Thyroid gland (tissue), 4 donors: ENCODE measurements at regions of chr9 and their contacts with region 1.

Region 1: DNA sequence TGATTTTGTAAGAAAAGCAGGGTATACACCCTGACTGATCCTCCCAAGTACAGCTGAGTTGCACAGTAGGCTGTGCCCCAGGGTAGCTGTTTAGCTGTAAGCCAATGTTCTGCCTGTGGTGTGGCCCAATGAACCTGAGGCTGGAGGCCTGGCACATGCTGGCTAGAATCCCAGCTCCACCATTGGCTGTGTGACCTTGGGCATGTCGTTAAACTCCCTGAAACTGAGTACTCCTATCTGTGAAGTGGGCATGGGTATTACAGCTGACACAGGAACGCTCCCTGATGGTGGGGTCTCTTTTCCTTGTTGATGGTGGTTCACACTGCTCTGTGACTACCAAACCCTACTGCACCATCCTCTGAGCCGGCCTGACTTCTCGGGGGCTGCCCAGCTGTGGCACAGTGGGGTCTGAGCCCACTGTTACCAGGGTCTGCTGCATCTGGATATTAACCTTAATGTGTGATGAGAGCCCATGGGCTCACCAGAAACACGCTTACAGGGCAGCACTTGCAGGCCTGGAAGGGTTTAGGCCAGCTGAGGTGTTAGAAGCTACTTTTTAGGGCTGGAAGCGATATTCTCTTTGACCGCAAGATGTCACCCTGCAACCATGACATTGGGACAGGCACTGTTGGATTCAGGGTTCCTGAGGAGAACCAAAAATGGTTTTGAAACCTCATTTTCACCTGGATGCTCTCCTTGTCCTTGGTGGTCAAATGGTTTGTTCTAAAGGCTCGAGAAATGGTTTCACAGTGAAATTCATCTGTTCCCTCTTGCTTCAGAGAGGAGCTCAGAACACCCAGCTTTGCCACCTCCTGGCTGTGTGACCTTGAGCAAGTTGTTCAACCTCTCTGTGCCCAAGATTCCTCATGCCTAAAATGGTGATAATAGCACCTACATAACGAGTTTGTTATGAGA is 6.8 kb upstream of the GADD45G start:
- DNase-seq: peak; percentile 61 to 63
- H3K4me3 ChIP-seq: no peak overlapping the region
- H3K27ac ChIP-seq: no peak overlapping the region
- H3K4me1 ChIP-seq: no peaks in the 10 kb centered on the region
- H3K27me3 ChIP-seq: no peaks in the 10 kb centered on the region
- CTCF ChIP-seq: peak; percentile 34 to 91 (median 86)
- POLR2A ChIP-seq: no peak

Region 2: GRCh38 chr9:90860826-90861225 is 1262.9 kb after region 1 on chr9:
- intact Hi-C with region 1: loop called (anchors 10 kb)
- DNase-seq: no peak
- H3K4me3 ChIP-seq: no peak overlapping the region
- H3K27ac ChIP-seq: no peak overlapping the region
- H3K4me1 ChIP-seq: no peaks in the 10 kb centered on the region
- H3K27me3 ChIP-seq: no peaks in the 10 kb centered on the region
- CTCF ChIP-seq: no peak
- POLR2A ChIP-seq: no peak